ENCODE measurements at regions of chr15 and their contacts with region 1.

Region 1: DNA sequence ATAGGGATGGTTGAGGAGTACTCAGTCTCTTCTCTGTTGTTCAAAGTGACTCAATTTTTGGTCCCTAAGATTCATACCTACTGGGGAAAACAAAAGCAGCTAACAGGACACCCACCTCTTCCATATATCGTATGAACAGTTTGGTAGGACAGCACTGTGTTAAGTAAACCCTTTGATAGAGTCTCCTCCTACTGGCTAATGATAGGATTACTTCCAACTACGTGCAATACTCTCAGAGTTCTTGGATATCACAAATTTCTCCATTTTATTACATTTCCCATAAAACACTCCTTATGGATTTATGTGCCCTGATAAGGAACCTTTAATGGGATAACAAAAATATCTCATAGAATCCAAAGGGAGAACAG is 200.2 kb upstream of the GOLGA6L4 start:
- DNase-seq: no peak
- ATAC-seq: peak; percentile 58

Region 2: GRCh38 chr15:83446904-83447709 is 588.3 kb before region 1 on chr15 and contains the start of gene SH3GL3:
- intact Hi-C with region 1: loop called (anchors 10 kb)
- DNase-seq: peak; percentile 91
- ATAC-seq: peak; percentile 97
- total RNA-seq, gene SH3GL3: not detected

Region 3: GRCh38 chr15:83571820-83572707 is 463.3 kb before region 1 on chr15:
- intact Hi-C with region 1: loop called (anchors 5 kb)
- DNase-seq: no peak
- ATAC-seq: no peak

Region 4: DNA sequence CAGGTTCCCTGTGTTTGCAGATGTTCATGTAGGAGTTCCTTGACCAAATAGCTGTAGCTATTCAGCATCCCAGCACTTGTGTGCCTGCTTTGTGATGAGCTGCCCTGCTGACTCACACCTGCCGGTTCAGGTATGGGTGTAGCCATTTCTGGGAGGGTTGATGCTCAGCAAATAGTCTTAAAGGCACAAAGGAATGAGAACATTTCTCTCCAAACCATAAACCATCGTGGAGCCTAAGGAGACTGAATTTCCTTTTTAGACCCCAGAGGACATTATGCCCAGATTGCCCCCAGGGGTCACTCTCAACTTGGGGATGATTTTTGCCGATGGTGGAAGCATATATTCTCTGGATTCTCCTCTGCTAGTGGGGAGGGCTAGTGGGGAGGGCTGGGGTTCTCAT is 300.9 kb before region 1 on chr15:
- intact Hi-C with region 1: loop called (anchors 1 kb)
- DNase-seq: no peak
- ATAC-seq: peak; percentile 46

Region 5: DNA sequence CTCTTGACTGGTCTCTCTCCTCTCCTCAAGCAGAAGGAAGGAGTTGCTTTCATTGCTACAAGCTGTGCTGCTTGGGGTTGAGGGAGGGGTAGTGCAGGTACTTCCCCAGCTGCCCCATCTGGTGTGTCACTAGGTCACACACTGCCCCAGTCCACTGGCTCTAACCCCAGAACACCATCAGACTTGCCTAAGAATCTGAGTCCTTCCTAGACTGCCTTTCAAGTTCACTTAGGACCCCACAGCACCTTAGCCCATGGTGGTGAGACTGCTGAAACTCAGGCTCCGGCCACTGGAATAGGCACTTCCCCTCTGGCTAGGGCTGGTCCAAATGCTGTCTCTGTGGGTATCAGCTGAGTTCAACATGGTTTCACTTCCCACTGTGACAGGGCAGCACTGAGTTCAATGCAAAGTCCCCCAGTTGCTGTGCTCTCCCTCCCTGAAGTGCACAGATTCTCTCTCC is 79.5 kb before region 1 on chr15:
- intact Hi-C with region 1: no loop called
- DNase-seq: no peak
- ATAC-seq: no peak

Region 6: GRCh38 chr15:83970295-83970890 is 65.0 kb before region 1 on chr15:
- intact Hi-C with region 1: no loop called
- DNase-seq: no peak
- ATAC-seq: peak; percentile 96

Region 7: GRCh38 chr15:84057714-84058331 is 22.4 kb after region 1 on chr15:
- intact Hi-C with region 1: no loop called
- DNase-seq: no peak
- ATAC-seq: no peak